Activated CD4-positive, alpha-beta memory T cell treated with anti-CD3 and anti-CD28 coated beads for 36 hours (primary cell): ENCODE measurements at regions of chrX and their contacts with region 1.

Region 1: GRCh38 chrX:20141281-20142220 is at the start of gene EIF1AX:
- DNase-seq: peak; percentile 97
- H3K4me3 Mint-ChIP-seq: peak within 1 kb of the TSS; percentile 83
- H3K27ac Mint-ChIP-seq: peak within 1 kb of the TSS; percentile 80
- H3K4me1 Mint-ChIP-seq: peaks cover 39% of the 10 kb centered on the region
- H3K27me3 Mint-ChIP-seq: no peaks in the 10 kb centered on the region
- total RNA-seq, gene EIF1AX: 117 to 121 TPM

Region 2: GRCh38 chrX:20197641-20198210 is 56.2 kb after region 1 on chrX:
- CTCF ChIA-PET with region 1: no interaction called
- POLR2A ChIA-PET with region 1: no interaction called
- intact Hi-C with region 1: no loop called
- DNase-seq: no peak
- H3K4me3 Mint-ChIP-seq: no peak overlapping the region
- H3K27ac Mint-ChIP-seq: no peak overlapping the region
- H3K4me1 Mint-ChIP-seq: peaks cover 29% of the 10 kb centered on the region
- H3K27me3 Mint-ChIP-seq: no peaks in the 10 kb centered on the region

Region 3: DNA sequence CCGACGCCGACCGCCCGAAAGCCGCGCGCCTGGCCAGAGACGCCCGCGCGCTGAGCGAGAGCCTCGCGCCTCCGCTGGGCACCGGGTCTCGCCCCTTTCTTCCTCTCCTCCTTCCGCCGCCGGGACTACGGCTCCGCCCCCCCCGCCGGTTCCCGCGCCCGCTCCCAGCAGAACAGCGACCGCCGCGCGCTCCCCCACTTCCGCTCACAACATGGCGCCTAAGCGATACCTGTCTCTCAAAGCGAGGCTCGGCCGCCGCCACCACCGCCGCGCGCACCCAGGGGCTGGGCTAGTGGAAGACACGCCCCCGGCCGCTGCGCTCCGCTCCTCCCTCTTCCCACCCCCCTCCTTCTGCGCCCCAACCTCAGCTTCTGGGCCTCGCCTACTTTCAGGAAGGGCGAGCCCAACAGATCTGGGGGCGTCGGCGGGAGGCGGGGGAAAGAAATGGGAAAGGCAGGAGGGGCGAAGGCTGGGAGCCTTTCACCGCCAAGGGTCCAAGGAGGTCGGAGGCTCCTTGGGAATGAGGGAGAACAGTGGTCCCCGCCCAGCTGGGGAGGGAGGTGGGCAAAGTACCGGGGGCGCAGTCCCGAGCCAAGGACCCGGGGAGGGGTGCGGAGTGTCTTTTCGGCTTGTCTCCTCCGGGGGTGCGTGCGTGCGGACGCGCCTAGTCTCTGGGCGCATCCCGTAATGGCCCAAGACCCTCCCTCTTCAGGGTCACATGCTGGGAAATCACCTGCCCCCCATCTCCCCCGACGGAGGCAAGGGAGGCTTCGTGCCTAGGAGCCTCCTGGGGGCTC is 125.5 kb after region 1 on chrX and contains the start of gene RPS6KA3:
- CTCF ChIA-PET with region 1: no interaction called
- POLR2A ChIA-PET with region 1: no interaction called
- intact Hi-C with region 1: loop called (anchors 5 kb)
- DNase-seq: peak; percentile 93
- H3K4me3 Mint-ChIP-seq: peak within 1 kb of the TSS; percentile 95
- H3K27ac Mint-ChIP-seq: peak within 1 kb of the TSS; percentile 99
- H3K4me1 Mint-ChIP-seq: peaks cover 18% of the 10 kb centered on the region
- H3K27me3 Mint-ChIP-seq: no peaks in the 10 kb centered on the region
- total RNA-seq, gene RPS6KA3: 51.8 to 52.0 TPM